Activated B cell treated with CpG ODN at 0.5 μM for 24 hours (primary cell): ENCODE measurements at regions of chr3 and their contacts with region 1.

Region 1: DNA sequence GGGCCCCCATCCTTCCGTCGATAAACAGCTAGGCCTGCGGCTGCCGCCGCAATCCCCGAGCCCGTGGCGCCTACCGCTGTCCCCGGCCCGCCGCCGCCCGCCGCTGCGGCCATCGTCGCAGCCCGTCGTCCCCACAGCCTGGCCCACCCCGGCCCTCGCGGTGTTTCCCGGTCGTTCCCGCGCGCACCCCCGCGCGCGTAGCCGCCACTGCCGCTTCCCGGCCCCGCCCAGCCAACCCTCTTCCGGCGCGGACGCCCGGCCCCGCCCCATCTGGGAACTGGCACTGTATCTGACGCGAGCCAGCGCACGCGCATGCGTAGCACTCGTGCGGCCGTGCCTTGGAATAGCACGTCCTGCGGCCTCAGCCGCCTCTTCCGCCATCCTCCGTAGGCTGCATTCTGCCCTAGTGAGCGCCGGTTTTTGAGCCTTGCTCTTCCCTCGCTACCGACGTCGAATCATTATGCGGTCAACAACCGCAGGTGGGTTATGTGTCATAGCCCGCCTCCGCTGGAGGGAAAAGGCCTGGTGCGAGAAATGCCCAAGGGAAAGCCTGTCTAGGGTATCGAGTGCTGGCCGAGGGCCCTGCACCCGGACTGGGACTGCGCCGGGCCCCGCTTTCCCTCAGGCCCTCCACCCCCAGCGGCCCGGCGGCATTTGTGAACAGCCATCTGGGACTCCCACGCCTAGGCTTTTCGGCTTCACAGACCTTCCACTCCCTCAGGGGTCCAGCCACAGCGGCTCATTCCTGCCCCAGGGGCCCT is at the start of gene SMARCC1:
- DNase-seq: peak; percentile 98
- ATAC-seq: peak; percentile 84
- H3K4me3 Mint-ChIP-seq: peak within 1 kb of the TSS; percentile 93
- H3K27ac Mint-ChIP-seq: peak within 1 kb of the TSS; percentile 98
- H3K4me1 Mint-ChIP-seq: peaks cover 47% of the 10 kb centered on the region
- H3K27me3 Mint-ChIP-seq: no peaks in the 10 kb centered on the region
- CTCF ChIP-seq: no peak
- total RNA-seq, gene SMARCC1: 136 and 144 TPM in 2 replicates

Region 2: GRCh38 chr3:47513125-47513929 is 268.5 kb before region 1 on chr3 and contains the start of gene ELP6:
- CTCF ChIA-PET with region 1: no interaction called
- POLR2A ChIA-PET with region 1: interaction called, 5 read pairs
- intact Hi-C with region 1: loop called (anchors 1 kb)
- DNase-seq: peak; percentile 95
- ATAC-seq: peak; percentile 93
- H3K4me3 Mint-ChIP-seq: peak within 1 kb of the TSS; percentile 98
- H3K27ac Mint-ChIP-seq: peak within 1 kb of the TSS; percentile 99
- H3K4me1 Mint-ChIP-seq: peaks cover 18% of the 10 kb centered on the region
- H3K27me3 Mint-ChIP-seq: no peaks in the 10 kb centered on the region
- CTCF ChIP-seq: no peak
- total RNA-seq, gene ELP6: 37.8 and 45.4 TPM in 2 replicates

Region 3: DNA sequence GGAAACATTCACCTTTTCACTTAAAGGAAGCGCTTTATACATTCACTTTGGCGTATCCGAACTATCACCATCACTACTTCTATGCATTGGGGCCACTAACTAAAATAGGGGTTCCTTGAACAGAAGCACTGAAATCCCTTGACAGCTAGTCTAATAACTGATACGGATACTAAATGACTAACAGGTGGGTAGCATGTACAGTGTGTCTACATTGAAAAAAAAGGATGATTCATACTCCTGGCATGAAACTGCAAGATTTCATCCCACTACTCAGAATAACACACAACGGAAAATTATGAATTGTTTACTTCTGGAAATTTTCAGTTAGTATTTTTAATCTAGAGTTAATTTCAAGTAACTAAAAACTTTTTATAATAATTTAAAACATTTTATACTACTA is 96.8 kb before region 1 on chr3:
- CTCF ChIA-PET with region 1: no interaction called
- POLR2A ChIA-PET with region 1: no interaction called
- intact Hi-C with region 1: loop called (anchors 5 kb)
- DNase-seq: no peak
- ATAC-seq: no peak
- H3K4me3 Mint-ChIP-seq: no peak overlapping the region
- H3K27ac Mint-ChIP-seq: no peak overlapping the region
- H3K4me1 Mint-ChIP-seq: no peaks in the 10 kb centered on the region
- H3K27me3 Mint-ChIP-seq: no peaks in the 10 kb centered on the region
- CTCF ChIP-seq: no peak

Region 4: DNA sequence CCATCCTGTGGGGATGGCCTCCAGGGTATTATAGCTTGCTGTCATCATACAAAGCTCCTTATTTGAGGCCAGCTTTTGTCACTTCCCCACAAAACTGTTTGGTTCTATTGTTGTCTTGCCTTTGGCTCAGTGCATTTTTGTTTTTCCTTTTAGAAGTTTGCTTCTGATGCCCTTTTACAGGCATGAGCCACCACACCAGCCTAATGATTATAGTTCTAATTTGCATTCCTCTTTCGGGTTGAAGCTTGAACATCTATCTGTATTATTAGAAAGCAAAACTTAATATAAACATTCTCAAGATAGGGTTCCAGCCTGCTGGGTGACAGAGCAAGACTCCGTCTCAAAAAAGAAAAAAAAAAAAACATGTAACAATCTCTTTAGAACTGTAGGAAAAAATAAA is 39.9 kb before region 1 on chr3:
- CTCF ChIA-PET with region 1: no interaction called
- POLR2A ChIA-PET with region 1: interaction called, 3 read pairs
- intact Hi-C with region 1: loop called (anchors 5 kb)
- DNase-seq: no peak
- ATAC-seq: no peak
- H3K4me3 Mint-ChIP-seq: no peak overlapping the region
- H3K27ac Mint-ChIP-seq: no peak overlapping the region
- H3K4me1 Mint-ChIP-seq: peaks cover 33% of the 10 kb centered on the region
- H3K27me3 Mint-ChIP-seq: no peaks in the 10 kb centered on the region
- CTCF ChIP-seq: no peak

Region 5: GRCh38 chr3:47824541-47825473 is 42.9 kb after region 1 on chr3:
- CTCF ChIA-PET with region 1: no interaction called
- POLR2A ChIA-PET with region 1: no interaction called
- intact Hi-C with region 1: loop called (anchors 1 kb)
- DNase-seq: peak; percentile 79
- ATAC-seq: peak; percentile 98
- H3K4me3 Mint-ChIP-seq: peak overlapping the region; percentile 88
- H3K27ac Mint-ChIP-seq: peak overlapping the region; percentile 73
- H3K4me1 Mint-ChIP-seq: peaks cover 38% of the 10 kb centered on the region
- H3K27me3 Mint-ChIP-seq: no peaks in the 10 kb centered on the region
- CTCF ChIP-seq: peak; percentile 39